Right ventricle myocardium inferior (tissue), 1 donor: ENCODE measurements at regions of chr6 and their contacts with region 1.

Region 1: GRCh38 chr6:143026696-143027449 is 33.8 kb upstream of the AIG1 start:
- DNase-seq: peak; percentile 60
- ATAC-seq: no peak

Region 2: GRCh38 chr6:142474531-142475289 is 552.2 kb before region 1 on chr6:
- intact Hi-C with region 1: loop called (anchors 10 kb)
- DNase-seq: no peak
- ATAC-seq: no peak

Region 3: GRCh38 chr6:142692942-142693341 is 333.9 kb before region 1 on chr6:
- intact Hi-C with region 1: loop called (anchors 1 kb)
- DNase-seq: no peak
- ATAC-seq: peak; percentile 76